ENCODE measurements at regions of chr3 and their contacts with region 1.

Region 1: GRCh38 chr3:32143849-32144757 is 37.7 kb downstream of the GPD1L start:
- DNase-seq: peak; percentile 87
- H3K4me3 ChIP-seq: no peak overlapping the region
- H3K27ac ChIP-seq: no peak overlapping the region
- H3K4me1 ChIP-seq: no peaks in the 10 kb centered on the region
- H3K27me3 ChIP-seq: no peaks in the 10 kb centered on the region
- CTCF ChIP-seq: peak; percentile 79

Region 2: DNA sequence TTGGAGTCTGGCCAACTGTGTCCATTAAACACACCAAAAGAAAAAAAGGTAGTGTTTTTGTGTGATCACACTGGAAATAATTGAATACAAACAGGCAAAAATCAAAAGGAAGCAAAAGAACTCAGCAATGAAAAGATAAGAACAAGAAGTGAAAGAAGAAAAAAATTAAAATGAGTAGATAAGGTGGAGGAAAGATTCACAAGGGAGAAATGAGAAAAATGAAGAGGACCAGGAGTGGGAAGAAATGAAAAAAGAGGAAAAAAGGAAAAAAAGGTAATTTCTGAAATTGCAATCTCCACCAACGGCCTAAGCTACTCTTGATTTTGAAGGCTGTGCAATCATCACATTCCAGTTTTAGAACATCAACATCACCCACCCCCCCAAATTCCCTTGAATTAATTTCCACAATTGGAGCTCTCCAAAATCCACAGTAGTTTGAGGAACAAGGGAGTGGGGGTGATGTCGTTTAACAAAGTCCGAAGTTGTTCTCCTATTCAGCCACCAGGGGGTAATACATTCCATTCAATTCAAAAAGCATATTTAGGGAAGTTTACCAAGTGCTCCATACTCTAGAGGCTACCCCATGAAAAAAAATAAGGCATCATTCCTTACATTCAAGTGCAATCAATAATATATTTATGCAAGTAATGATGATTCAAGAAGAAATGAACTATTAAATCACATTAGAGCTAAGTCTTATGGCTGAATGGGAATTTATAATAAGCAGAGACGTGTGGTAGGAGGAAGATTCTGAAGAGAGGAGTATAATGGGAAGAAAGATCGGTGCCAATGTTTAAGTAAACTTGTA is 125.1 kb before region 1 on chr3:
- CTCF ChIA-PET with region 1: interaction called, 4 read pairs
- POLR2A ChIA-PET with region 1: no interaction called
- intact Hi-C with region 1: loop called (anchors 1 kb)
- DNase-seq: peak; percentile 64
- H3K4me3 ChIP-seq: no peak overlapping the region
- H3K27ac ChIP-seq: no peak overlapping the region
- H3K4me1 ChIP-seq: no peaks in the 10 kb centered on the region
- H3K27me3 ChIP-seq: no peaks in the 10 kb centered on the region
- CTCF ChIP-seq: peak; percentile 72

Measured in A673 (cell line).